Activated naive CD4-positive, alpha-beta T cell treated with anti-CD3 and anti-CD28 coated beads for 36 hours (primary cell): ENCODE measurements at regions of chr7 and their contacts with region 1.

Region 1: GRCh38 chr7:92621026-92621540 is 30.9 kb upstream of the FAM133B start:
- DNase-seq: peak; percentile 93
- H3K4me3 Mint-ChIP-seq: peak overlapping the region; percentile 4
- H3K27ac Mint-ChIP-seq: peak overlapping the region; percentile 80
- H3K4me1 Mint-ChIP-seq: peaks cover 46% of the 10 kb centered on the region
- H3K27me3 Mint-ChIP-seq: no peaks in the 10 kb centered on the region

Region 2: GRCh38 chr7:92648067-92648466 is 27.0 kb after region 1 on chr7:
- CTCF ChIA-PET with region 1: interaction called, 15 read pairs
- intact Hi-C with region 1: loop called (anchors 1 kb)
- DNase-seq: no peak
- H3K4me3 Mint-ChIP-seq: no peak overlapping the region
- H3K27ac Mint-ChIP-seq: peak overlapping the region; percentile 88
- H3K4me1 Mint-ChIP-seq: peaks cover 89% of the 10 kb centered on the region
- H3K27me3 Mint-ChIP-seq: no peaks in the 10 kb centered on the region

Region 3: GRCh38 chr7:92880212-92881090 is 259.4 kb after region 1 on chr7:
- CTCF ChIA-PET with region 1: no interaction called
- intact Hi-C with region 1: loop called (anchors 1 kb)
- DNase-seq: peak; percentile 43
- H3K4me3 Mint-ChIP-seq: no peak overlapping the region
- H3K27ac Mint-ChIP-seq: no peak overlapping the region
- H3K4me1 Mint-ChIP-seq: peaks cover 34% of the 10 kb centered on the region
- H3K27me3 Mint-ChIP-seq: peaks cover 9% of the 10 kb centered on the region

Region 4: DNA sequence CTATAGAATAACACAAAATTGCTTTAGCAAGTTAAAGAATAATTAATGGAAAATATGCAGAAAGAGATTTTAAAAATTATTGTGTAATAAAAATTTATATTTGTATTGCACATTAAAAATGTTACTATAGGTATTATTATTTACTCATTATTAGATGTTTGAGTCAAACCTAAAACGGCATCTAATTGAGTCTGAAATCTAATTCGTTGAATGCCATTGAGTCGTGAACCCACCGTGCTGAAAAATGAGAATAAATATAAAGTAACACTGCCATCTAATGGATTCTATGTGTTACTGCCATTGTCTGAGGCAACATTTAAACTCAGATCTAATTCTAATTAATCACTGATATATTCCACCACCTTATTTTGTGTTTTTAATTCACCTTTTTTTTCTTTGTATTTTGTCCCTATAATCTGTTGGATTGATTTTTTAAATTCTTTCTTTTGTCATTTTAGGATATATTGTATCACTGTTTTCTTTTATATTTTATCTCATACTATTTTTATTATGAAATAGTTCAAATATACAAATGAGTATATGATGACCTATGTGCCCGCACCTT is 434.5 kb after region 1 on chr7:
- CTCF ChIA-PET with region 1: interaction called, 5 read pairs
- intact Hi-C with region 1: loop called (anchors 1 kb)
- DNase-seq: no peak
- H3K4me3 Mint-ChIP-seq: no peak overlapping the region
- H3K27ac Mint-ChIP-seq: no peak overlapping the region
- H3K4me1 Mint-ChIP-seq: peaks cover 11% of the 10 kb centered on the region
- H3K27me3 Mint-ChIP-seq: peaks cover 7% of the 10 kb centered on the region